Activated naive CD4-positive, alpha-beta T cell treated with anti-CD3 and anti-CD28 coated beads for 36 hours (primary cell): ENCODE measurements at regions of chr6 and their contacts with region 1.

Region 1: GRCh38 chr6:31128093-31128676 is 7.9 kb upstream of the CDSN start:
- DNase-seq: peak; percentile 90
- H3K4me3 Mint-ChIP-seq: no peak overlapping the region
- H3K27ac Mint-ChIP-seq: no peak overlapping the region
- H3K4me1 Mint-ChIP-seq: peaks cover 5% of the 10 kb centered on the region
- H3K27me3 Mint-ChIP-seq: no peaks in the 10 kb centered on the region

Region 2: GRCh38 chr6:30463651-30464618 is 664.2 kb before region 1 on chr6:
- CTCF ChIA-PET with region 1: no interaction called
- intact Hi-C with region 1: no loop called
- DNase-seq: peak; percentile 77
- H3K4me3 Mint-ChIP-seq: no peak overlapping the region
- H3K27ac Mint-ChIP-seq: no peak overlapping the region
- H3K4me1 Mint-ChIP-seq: peaks cover 29% of the 10 kb centered on the region
- H3K27me3 Mint-ChIP-seq: peaks cover 83% of the 10 kb centered on the region

Region 3: DNA sequence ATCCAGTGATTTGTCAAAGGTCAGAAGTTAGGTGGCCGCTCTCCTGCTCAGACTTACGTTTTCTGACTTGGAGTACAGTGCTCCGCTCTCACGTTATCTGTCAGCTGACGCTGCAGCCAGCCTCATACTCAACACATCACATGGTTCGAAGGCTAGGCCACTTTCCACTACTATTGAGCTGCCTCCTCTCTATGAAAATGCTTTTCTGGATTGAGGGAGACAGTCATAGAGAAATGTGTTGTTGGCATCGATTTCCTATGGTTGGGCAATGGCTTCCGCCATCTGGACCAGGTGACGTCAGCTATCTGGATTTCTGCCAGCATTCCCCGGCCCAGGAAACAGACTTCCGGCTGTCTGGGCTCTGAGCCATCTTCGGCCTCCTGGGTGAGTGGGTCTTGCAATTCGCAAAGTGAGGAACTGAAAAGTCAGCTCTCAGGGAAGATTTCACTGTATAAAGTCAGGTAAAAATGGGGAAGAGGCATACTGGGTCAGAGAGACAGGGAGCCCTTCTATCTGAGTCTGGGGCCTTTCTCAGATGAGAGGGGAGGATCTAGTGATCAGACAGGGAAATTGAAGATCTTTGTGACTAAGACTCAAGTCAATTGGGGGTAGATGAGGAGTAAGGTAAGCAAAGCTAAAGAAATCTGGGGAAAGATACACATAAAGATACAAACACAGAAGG is 346.3 kb before region 1 on chr6:
- CTCF ChIA-PET with region 1: no interaction called
- intact Hi-C with region 1: no loop called
- DNase-seq: peak; percentile 56
- H3K4me3 Mint-ChIP-seq: peak overlapping the region; percentile 56
- H3K27ac Mint-ChIP-seq: peak overlapping the region; percentile 76
- H3K4me1 Mint-ChIP-seq: peaks cover 63% of the 10 kb centered on the region
- H3K27me3 Mint-ChIP-seq: no peaks in the 10 kb centered on the region

Region 4: GRCh38 chr6:31114970-31115849 is 13.0 kb before region 1 on chr6:
- CTCF ChIA-PET with region 1: interaction called, 10 read pairs
- intact Hi-C with region 1: no loop called
- DNase-seq: no peak
- H3K4me3 Mint-ChIP-seq: no peak overlapping the region
- H3K27ac Mint-ChIP-seq: no peak overlapping the region
- H3K4me1 Mint-ChIP-seq: peaks cover 5% of the 10 kb centered on the region
- H3K27me3 Mint-ChIP-seq: no peaks in the 10 kb centered on the region